Breast epithelium (tissue), 4 donors: ENCODE measurements at regions of chr4 and their contacts with region 1.

Region 1: DNA sequence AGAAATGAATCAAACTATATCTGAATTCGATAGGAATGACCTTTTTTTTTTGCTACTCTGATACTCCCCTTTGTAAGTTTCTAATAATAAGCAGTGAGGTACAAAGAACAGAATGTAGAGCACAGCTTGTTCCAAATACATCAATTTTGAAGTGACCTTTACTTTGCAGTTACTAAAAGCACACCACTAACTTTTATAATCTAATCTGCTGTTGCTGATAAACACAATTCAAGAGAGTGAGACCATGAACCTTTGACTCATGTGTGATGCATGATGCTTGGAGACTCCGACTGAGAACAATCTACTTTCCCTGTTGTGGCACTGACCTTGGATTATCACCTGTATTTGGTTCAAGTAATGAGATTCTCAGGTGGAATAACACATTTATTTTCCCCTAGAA is 91.6 kb upstream of the GNPDA2 start:
- DNase-seq: no peak
- H3K4me3 ChIP-seq: no peak overlapping the region
- H3K27ac ChIP-seq: no peak overlapping the region
- H3K4me1 ChIP-seq: no peaks in the 10 kb centered on the region
- H3K27me3 ChIP-seq: no peaks in the 10 kb centered on the region
- CTCF ChIP-seq: no peak
- POLR2A ChIP-seq: no peak

Region 2: GRCh38 chr4:44425614-44426208 is 392.2 kb before region 1 on chr4:
- intact Hi-C with region 1: no loop called
- DNase-seq: no peak
- H3K4me3 ChIP-seq: no peak overlapping the region
- H3K27ac ChIP-seq: no peak overlapping the region
- H3K4me1 ChIP-seq: no peaks in the 10 kb centered on the region
- H3K27me3 ChIP-seq: no peaks in the 10 kb centered on the region
- CTCF ChIP-seq: no peak
- POLR2A ChIP-seq: no peak

Region 3: DNA sequence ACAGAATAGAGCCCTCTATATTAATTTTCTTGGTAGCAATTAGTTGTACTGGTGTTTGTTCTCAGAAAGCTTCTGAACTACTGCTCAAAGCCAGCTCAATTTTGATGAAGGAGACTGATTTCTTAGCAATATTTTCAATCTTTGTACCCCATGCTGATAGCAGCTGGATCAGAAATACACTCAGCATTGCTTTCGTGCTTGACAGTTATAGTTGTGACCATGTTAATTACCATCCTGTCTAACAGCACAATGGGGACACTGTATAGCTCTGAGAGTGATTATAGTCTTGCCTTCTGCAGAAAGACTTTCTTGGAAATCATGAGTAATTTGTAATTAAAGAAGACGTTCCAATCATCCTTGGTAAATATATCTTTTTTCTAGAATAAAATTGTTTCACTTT is 11.9 kb before region 1 on chr4:
- intact Hi-C with region 1: loop called (anchors 1 kb)
- DNase-seq: no peak
- H3K4me3 ChIP-seq: no peak overlapping the region
- H3K27ac ChIP-seq: no peak overlapping the region
- H3K4me1 ChIP-seq: no peaks in the 10 kb centered on the region
- H3K27me3 ChIP-seq: no peaks in the 10 kb centered on the region
- CTCF ChIP-seq: no peak
- POLR2A ChIP-seq: no peak